ENCODE measurements at regions of chr10 and their contacts with region 1.

Region 1: GRCh38 chr10:74913377-74913979 is 87.1 kb downstream of the KAT6B start:
- DNase-seq: peak; percentile 23 to 68 (median 55)
- H3K4me3 ChIP-seq: peak overlapping the region in 3 of 7 experiments; percentile 33 to 74 (median 51)
- H3K27ac ChIP-seq: peak overlapping the region in 1 of 2 experiments; percentile 77
- H3K4me1 ChIP-seq: peaks cover 5 to 28% (median 19%) of the 10 kb centered on the region in 4 experiments
- H3K27me3 ChIP-seq: no peaks in the 10 kb centered on the region

Region 2: GRCh38 chr10:74677951-74678350 is 235.5 kb before region 1 on chr10:
- CTCF ChIA-PET with region 1: no interaction called
- POLR2A ChIA-PET with region 1: no interaction called
- DNase-seq: no peak
- H3K4me3 ChIP-seq: no peak overlapping the region
- H3K27ac ChIP-seq: no peak overlapping the region
- H3K4me1 ChIP-seq: no peaks in the 10 kb centered on the region
- H3K27me3 ChIP-seq: no peaks in the 10 kb centered on the region

Region 3: GRCh38 chr10:74923556-74923955 is 10.1 kb after region 1 on chr10:
- CTCF ChIA-PET with region 1: interaction called, 10 read pairs
- POLR2A ChIA-PET with region 1: no interaction called
- DNase-seq: peak; percentile 24 to 76 (median 65)
- H3K4me3 ChIP-seq: no peak overlapping the region
- H3K27ac ChIP-seq: peak overlapping the region in 1 of 2 experiments; percentile 12
- H3K4me1 ChIP-seq: peaks cover 2 to 40% (median 19%) of the 10 kb centered on the region in 4 experiments
- H3K27me3 ChIP-seq: no peaks in the 10 kb centered on the region

Region 4: GRCh38 chr10:75062506-75063299 is 149.2 kb after region 1 on chr10:
- CTCF ChIA-PET with region 1: no interaction called
- POLR2A ChIA-PET with region 1: no interaction called
- DNase-seq: peak in 1 of 3 donors; percentile 84
- H3K4me3 ChIP-seq: no peak overlapping the region
- H3K27ac ChIP-seq: no peak overlapping the region
- H3K4me1 ChIP-seq: peaks cover 0 to 4% (median 0%) of the 10 kb centered on the region in 4 experiments
- H3K27me3 ChIP-seq: no peaks in the 10 kb centered on the region

Region 5: GRCh38 chr10:75319274-75319673 is 405.8 kb after region 1 on chr10:
- CTCF ChIA-PET with region 1: no interaction called
- POLR2A ChIA-PET with region 1: no interaction called
- DNase-seq: no peak
- H3K4me3 ChIP-seq: no peak overlapping the region
- H3K27ac ChIP-seq: no peak overlapping the region
- H3K4me1 ChIP-seq: no peaks in the 10 kb centered on the region
- H3K27me3 ChIP-seq: no peaks in the 10 kb centered on the region

Measured in common myeloid progenitor, CD34-positive (primary cell).